PC-9 (cell line): ENCODE measurements at regions of chr4 and their contacts with region 1.

Region 1: GRCh38 chr4:169010125-169011023 is at the start of gene CBR4:
- DNase-seq: peak; percentile 90 to 93
- H3K4me3 ChIP-seq: peak within 1 kb of the TSS; percentile 83
- H3K27ac ChIP-seq: peak within 1 kb of the TSS; percentile 86
- H3K4me1 ChIP-seq: peaks cover 33% of the 10 kb centered on the region
- H3K27me3 ChIP-seq: no peaks in the 10 kb centered on the region
- CTCF ChIP-seq: no peak
- total RNA-seq, gene CBR4: 28.9 and 35.7 TPM in 2 replicates

Region 2: GRCh38 chr4:168183717-168184608 is 826.4 kb before region 1 on chr4:
- CTCF ChIA-PET with region 1: no interaction called
- POLR2A ChIA-PET with region 1: no interaction called
- intact Hi-C with region 1: loop called (anchors 5 kb)
- DNase-seq: no peak
- H3K4me3 ChIP-seq: no peak overlapping the region
- H3K27ac ChIP-seq: no peak overlapping the region
- H3K4me1 ChIP-seq: no peaks in the 10 kb centered on the region
- H3K27me3 ChIP-seq: no peaks in the 10 kb centered on the region
- CTCF ChIP-seq: peak; percentile 78

Region 3: DNA sequence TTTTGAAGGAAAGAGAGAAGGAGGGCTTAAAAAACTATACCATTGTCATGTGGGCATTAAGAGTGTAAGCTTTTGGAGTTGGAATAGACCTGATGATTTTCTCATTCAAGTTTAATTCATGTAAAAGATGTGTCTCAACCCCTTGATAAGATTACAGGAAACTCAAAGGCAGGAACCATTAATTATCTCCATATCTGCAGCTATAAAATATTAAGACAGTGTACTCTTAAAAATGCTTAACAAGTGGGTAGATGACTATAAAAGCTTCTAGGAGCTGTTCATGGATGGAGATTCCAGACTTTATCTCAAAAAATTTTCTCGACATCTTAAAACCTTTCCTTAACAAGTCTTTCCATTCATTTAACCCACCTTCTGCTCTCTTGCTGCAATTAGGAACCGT is 305.3 kb before region 1 on chr4:
- CTCF ChIA-PET with region 1: interaction called, 11 read pairs
- POLR2A ChIA-PET with region 1: no interaction called
- intact Hi-C with region 1: no loop called
- DNase-seq: no peak
- H3K4me3 ChIP-seq: no peak overlapping the region
- H3K27ac ChIP-seq: no peak overlapping the region
- H3K4me1 ChIP-seq: no peaks in the 10 kb centered on the region
- H3K27me3 ChIP-seq: no peaks in the 10 kb centered on the region
- CTCF ChIP-seq: no peak

Region 4: GRCh38 chr4:169069972-169070902 is 59.9 kb after region 1 on chr4:
- CTCF ChIA-PET with region 1: interaction called, 4 read pairs
- POLR2A ChIA-PET with region 1: interaction called, 27 read pairs
- intact Hi-C with region 1: loop called (anchors 1 kb)
- DNase-seq: peak; percentile 88 to 99
- H3K4me3 ChIP-seq: peak overlapping the region; percentile 53; the same call in 1 of the 2 replicates
- H3K27ac ChIP-seq: peak overlapping the region; percentile 97
- H3K4me1 ChIP-seq: peaks cover 47% of the 10 kb centered on the region
- H3K27me3 ChIP-seq: no peaks in the 10 kb centered on the region
- CTCF ChIP-seq: no peak

Region 5: DNA sequence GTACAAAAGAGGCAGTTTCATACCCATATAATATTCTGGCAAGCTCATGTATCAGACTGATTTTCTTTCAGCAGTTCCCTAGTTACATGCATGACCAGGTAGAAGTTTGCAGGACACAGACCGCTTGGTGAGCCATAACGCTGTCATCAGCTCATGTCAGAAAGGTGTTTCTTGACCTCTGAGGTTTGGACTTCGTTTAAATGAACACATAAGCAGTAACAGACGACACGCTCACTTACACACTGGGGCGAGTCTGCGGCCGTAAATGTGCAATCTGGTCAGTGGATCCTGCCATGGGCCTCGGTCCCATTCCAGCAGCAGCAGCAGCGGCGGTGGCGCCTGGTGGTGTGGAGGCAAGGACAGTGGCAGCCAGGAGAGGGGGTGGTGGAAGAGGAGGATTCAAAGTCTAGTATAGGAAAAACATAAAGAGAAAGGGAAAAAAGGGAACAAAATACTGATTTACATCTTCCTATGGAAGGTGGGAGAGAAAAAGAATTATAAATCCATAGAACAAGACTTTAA is 111.5 kb after region 1 on chr4:
- CTCF ChIA-PET with region 1: no interaction called
- POLR2A ChIA-PET with region 1: interaction called, 11 read pairs
- intact Hi-C with region 1: no loop called
- DNase-seq: no peak
- H3K4me3 ChIP-seq: no peak overlapping the region
- H3K27ac ChIP-seq: no peak overlapping the region
- H3K4me1 ChIP-seq: peaks cover 28% of the 10 kb centered on the region
- H3K27me3 ChIP-seq: no peaks in the 10 kb centered on the region
- CTCF ChIP-seq: no peak

Region 6: GRCh38 chr4:169383724-169384123 is 373.4 kb after region 1 on chr4:
- CTCF ChIA-PET with region 1: interaction called, 3 read pairs
- POLR2A ChIA-PET with region 1: interaction called, 11 read pairs
- intact Hi-C with region 1: no loop called
- DNase-seq: peak in 1 of 2 experiments; percentile 38
- H3K4me3 ChIP-seq: no peak overlapping the region
- H3K27ac ChIP-seq: no peak overlapping the region
- H3K4me1 ChIP-seq: no peaks in the 10 kb centered on the region
- H3K27me3 ChIP-seq: no peaks in the 10 kb centered on the region
- CTCF ChIP-seq: no peak

Region 7: DNA sequence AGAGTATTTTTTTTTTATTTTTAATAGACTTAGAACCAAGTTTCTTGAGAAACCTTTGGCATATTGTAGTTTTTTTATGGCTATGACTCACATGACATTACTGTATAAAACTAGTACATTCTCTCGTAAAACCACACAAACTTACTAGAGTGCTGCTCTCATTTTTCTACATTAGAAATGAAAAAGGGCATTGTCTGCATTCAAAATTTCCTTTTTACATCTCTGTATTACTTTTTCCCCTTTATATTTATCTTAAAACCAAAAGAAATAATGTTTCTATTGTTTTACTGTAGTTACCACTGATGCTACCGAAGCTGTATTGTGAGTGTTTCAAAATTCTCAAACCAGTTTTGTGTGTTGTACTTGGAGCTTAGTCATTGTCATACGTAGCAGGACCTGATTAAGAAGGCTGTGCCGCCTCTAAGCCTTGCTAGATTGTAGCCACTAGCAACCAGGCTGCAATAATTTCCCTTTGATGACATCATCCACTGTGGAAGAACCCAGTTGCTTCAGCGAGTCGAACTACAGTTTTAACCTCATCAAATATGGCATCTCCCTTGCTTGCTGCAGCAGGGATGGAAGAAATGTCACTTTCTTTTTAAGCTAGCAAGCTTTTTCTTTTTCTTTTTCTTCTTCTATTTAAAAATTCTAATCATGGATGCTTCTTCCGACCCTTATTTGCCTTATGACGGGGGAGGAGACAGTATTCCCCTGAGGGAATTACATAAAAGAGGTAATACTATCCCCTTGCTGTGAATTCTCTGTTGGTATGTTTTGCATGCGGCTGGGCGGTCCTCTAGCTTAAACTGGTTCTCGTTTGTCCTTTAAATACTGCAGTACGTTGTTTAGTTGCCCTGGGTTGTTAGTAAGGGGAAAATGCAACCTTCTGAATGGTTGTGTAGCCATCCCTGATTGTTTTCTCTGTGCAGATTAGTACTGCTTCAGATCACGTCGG is 649.6 kb after region 1 on chr4:
- CTCF ChIA-PET with region 1: no interaction called
- POLR2A ChIA-PET with region 1: interaction called, 14 read pairs
- intact Hi-C with region 1: no loop called
- DNase-seq: peak; percentile 77 to 97
- H3K4me3 ChIP-seq: peak overlapping the region; percentile 68
- H3K27ac ChIP-seq: peak overlapping the region; percentile 98
- H3K4me1 ChIP-seq: peaks cover 47% of the 10 kb centered on the region
- H3K27me3 ChIP-seq: no peaks in the 10 kb centered on the region
- CTCF ChIP-seq: no peak